ENCODE measurements at regions of chr6 and their contacts with region 1.

Region 1: DNA sequence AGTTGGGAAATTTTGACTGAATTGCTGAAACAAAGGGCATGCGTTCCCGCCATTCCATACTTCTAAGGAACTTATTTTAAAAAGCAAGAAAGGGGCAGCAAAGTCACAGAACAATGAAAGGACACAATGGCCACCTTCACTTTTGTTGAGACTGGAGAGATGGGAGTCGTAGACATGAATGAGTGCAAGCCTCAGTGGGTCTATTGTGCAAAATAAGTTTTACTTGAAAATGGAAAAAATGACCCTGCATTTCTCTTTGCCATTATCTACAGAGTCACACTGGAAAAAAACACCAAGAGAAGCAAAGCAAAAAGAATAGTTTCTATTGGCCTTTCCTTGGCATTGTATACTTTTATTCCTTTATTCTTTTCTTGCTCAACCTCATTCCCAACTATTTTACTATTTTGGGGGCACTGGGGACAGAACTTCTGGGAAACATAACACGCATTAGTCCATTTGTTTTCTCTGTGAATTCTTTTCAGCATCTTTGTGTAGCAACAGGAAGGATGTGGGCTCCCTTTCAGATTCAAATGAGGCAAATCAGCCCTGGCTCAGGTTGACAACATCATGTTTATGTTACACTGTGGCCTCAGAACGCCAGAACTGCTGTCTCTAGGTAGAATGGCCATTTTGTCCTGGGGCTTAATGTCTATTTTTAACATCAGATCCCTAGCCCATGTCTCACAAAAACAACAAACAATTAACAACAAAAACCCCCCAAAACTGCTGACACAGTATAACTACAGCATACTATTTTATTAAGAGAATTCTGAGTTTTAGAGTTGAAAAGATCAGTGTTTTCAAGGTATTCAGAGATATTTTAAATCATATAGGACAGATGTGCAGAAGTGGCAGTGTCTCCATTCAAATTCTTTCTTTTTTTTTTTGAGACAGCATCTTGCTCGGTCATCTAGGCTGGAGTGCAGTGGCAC is 122.2 kb downstream of the FYN start:
- DNase-seq: peak; percentile 87
- ATAC-seq: peak; percentile 85
- H3K4me3 Mint-ChIP-seq: peak overlapping the region; percentile 27
- H3K27ac Mint-ChIP-seq: peak overlapping the region; percentile 96
- H3K4me1 Mint-ChIP-seq: peaks cover 94% of the 10 kb centered on the region
- H3K27me3 Mint-ChIP-seq: no peaks in the 10 kb centered on the region

Region 2: GRCh38 chr6:111625461-111626391 is 125.3 kb before region 1 on chr6:
- CTCF ChIA-PET with region 1: no interaction called
- DNase-seq: no peak
- ATAC-seq: no peak
- H3K4me3 Mint-ChIP-seq: no peak overlapping the region
- H3K27ac Mint-ChIP-seq: no peak overlapping the region
- H3K4me1 Mint-ChIP-seq: no peaks in the 10 kb centered on the region
- H3K27me3 Mint-ChIP-seq: no peaks in the 10 kb centered on the region

Region 3: DNA sequence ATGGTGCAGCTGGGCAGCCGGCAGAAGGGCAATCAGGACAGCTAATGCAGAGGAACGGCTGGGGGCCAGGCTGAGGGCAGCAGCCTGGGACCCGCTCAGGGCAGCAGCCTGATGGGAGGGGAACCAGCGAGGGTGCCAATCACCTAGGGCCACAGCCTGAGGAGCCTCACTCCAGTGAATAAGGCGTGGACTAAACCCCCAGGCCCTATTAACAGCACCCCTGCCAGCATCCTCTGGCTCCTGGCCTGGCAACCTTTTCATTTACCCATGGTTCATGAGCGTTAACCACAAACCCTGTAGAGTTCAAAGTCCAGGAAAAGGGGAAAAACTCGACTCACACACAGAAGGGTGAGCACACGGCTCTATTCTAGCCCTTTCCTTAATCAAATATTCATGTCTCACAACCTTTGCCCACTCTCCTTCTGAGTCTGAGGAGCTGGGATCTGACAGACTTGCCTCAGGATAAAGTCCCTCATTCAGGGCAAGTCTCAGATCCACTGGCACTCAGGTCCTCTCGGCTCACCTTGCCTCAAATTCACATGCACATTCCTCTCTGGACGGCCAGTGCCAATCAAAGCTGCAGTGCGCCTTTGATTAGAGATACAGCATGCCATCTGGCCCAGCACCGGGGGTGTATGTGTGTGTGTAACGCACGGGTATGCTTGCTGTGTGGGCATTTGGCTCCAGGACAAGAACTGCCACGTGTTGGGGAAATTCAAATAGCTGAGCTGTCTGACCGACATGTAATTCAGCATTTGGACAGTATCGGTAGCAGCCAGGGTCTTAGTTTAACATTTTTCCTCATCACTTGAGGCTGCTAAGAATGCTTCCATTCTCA is 58.5 kb before region 1 on chr6:
- CTCF ChIA-PET with region 1: no interaction called
- DNase-seq: no peak
- ATAC-seq: no peak
- H3K4me3 Mint-ChIP-seq: no peak overlapping the region
- H3K27ac Mint-ChIP-seq: no peak overlapping the region
- H3K4me1 Mint-ChIP-seq: peaks cover 3% of the 10 kb centered on the region
- H3K27me3 Mint-ChIP-seq: no peaks in the 10 kb centered on the region

Region 4: GRCh38 chr6:111737065-111737521 is 13.9 kb before region 1 on chr6:
- CTCF ChIA-PET with region 1: interaction called, 12 read pairs
- DNase-seq: peak; percentile 75
- ATAC-seq: peak; percentile 80
- H3K4me3 Mint-ChIP-seq: no peak overlapping the region
- H3K27ac Mint-ChIP-seq: peak overlapping the region; percentile 37
- H3K4me1 Mint-ChIP-seq: peaks cover 90% of the 10 kb centered on the region
- H3K27me3 Mint-ChIP-seq: no peaks in the 10 kb centered on the region

Measured in activated CD8-positive, alpha-beta memory T cell treated with anti-CD3 and anti-CD28 coated beads, Interleukin-2, amount 10 ng/mL, durations not matched to agents 7 days and 5 days (primary cell).